Sigmoid colon (tissue), 7 donors: ENCODE measurements at regions of chr20 and their contacts with region 1.

Region 1: DNA sequence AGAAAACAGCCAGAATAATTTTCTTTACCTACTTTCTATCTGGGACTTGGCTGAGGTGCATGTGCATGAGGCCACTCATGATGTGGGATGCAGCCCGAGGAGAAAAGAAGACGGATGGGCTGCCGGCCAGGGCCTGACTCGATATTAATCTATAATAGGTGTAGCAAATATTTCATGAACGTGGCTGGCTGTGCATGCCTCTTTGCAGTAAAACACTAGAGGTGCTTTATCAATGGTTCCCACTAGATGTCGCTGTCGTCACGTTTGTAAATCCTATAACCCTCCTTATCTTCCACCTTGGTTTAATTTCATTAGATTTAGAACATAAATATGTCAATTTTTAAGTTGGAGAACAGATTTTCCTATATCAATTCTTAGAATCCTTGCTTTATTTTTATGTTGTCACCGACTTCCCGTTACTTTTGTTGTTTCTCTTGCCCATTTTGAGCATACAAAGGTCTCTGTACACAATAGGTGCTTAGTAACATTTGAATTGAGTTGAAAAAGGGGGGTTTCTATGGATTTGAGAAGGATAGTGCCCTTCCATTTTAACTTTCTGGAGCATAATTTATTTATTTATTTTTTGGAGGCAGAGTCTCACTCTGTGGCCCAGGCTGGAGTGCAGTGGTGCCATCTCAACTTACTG is 19.6 kb upstream of the FERMT1 start:
- DNase-seq: no peak
- H3K4me3 ChIP-seq: no peak overlapping the region
- H3K27ac ChIP-seq: no peak overlapping the region
- H3K4me1 ChIP-seq: no peaks in the 10 kb centered on the region
- H3K27me3 ChIP-seq: peaks cover 0 to 11% (median 0%) of the 10 kb centered on the region in 3 donors
- CTCF ChIP-seq: peak; percentile 12 to 76 (median 48)
- EP300 ChIP-seq: no peak
- POLR2A ChIP-seq: no peak

Region 2: DNA sequence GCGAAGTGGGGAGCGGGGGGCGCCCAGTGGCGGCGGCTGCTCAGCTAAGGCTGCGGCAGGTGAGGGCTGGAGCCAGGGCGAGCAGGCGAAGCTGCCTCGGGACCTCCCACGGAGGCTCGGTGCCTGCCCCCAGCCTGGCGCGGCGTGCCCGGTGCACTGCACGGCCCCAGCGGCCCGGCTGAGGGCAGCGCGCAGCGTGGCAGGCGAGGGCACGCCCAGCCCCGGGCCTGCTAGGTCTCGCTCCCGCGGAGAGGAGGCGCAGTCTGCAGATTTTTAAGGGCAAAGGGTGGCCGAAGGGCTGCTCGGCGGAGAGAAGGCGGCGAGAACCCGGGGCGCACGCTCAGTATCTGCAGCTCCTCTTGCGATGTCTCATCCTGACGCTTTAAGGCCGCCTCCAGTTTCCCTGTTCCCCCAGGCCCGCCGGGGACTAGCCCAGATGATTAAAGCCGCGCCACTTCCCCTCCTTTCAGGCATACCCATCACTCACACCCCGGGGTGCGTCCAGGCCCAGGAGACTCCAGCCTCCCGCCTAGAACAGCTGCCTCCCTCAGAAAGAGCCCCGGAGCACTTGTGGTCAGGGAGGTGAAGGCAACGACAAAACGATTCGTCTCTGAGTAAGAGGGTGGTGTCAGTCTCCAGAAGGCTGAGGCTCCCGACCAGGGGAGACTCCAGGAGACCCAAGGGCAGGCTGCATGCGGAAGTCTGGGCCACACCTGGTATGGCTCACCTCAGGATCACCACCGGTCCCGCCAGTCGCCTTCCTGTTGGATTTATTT is 19.4 kb before region 1 on chr20 and contains the start of gene FERMT1:
- intact Hi-C with region 1: no loop called
- DNase-seq: peak; percentile 68
- H3K4me3 ChIP-seq: peak within 1 kb of the TSS; percentile 7 to 51 (median 44)
- H3K27ac ChIP-seq: peak within 1 kb of the TSS in 3 of 4 donors; percentile 7 to 18 (median 18)
- H3K4me1 ChIP-seq: peaks cover 0 to 16% (median 12%) of the 10 kb centered on the region in 4 donors
- H3K27me3 ChIP-seq: peaks cover 5 to 40% (median 12%) of the 10 kb centered on the region in 3 donors
- CTCF ChIP-seq: no peak
- EP300 ChIP-seq: no peak
- POLR2A ChIP-seq: no peak
- total RNA-seq, gene FERMT1: 0.16 to 0.41 (median 0.32) TPM

Region 3: GRCh38 chr20:6209093-6209492 is 66.6 kb after region 1 on chr20:
- intact Hi-C with region 1: no loop called
- DNase-seq: no peak
- H3K4me3 ChIP-seq: no peak overlapping the region
- H3K27ac ChIP-seq: no peak overlapping the region
- H3K4me1 ChIP-seq: no peaks in the 10 kb centered on the region
- H3K27me3 ChIP-seq: no peaks in the 10 kb centered on the region
- CTCF ChIP-seq: no peak
- EP300 ChIP-seq: no peak
- POLR2A ChIP-seq: no peak

Region 4: DNA sequence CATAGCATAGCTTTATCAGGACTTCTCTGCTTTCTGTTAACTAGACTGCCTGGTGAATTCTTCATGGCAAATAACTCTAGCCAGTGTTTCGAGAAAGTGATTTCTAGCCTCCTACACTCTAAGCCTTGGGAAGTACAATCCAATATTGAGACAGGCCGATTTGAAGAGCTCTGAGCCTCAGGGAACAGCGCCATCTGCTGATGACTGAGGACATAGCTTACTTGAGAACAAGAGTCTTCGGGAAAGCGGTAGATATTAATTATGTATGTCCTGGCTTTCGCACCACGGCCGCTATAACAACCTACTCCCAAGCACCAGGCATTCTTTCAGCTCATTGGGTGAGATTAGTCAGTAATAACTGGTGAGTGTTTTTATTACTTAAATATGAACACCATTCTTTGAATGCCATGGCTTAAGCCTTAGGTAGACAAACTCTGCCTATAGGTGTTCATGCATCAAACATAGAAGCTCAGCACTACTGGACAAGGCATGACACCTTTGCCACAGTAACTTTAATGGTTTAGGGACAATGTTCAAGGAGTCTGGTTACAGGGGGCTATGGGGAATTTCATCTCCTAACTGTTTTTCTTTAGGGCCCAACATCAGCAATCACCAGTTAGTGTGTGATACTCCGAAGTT is 1143.6 kb after region 1 on chr20:
- intact Hi-C with region 1: loop called (anchors 5 kb)
- DNase-seq: peak; percentile 82
- H3K4me3 ChIP-seq: no peak overlapping the region
- H3K27ac ChIP-seq: no peak overlapping the region
- H3K4me1 ChIP-seq: no peaks in the 10 kb centered on the region
- H3K27me3 ChIP-seq: no peaks in the 10 kb centered on the region
- CTCF ChIP-seq: peak; percentile 10 to 72 (median 58)
- EP300 ChIP-seq: no peak
- POLR2A ChIP-seq: no peak

Region 5: GRCh38 chr20:7859356-7859802 is 1716.9 kb after region 1 on chr20:
- intact Hi-C with region 1: loop called (anchors 5 kb)
- DNase-seq: no peak
- H3K4me3 ChIP-seq: no peak overlapping the region
- H3K27ac ChIP-seq: no peak overlapping the region
- H3K4me1 ChIP-seq: peaks cover 0 to 4% (median 0%) of the 10 kb centered on the region in 4 donors
- H3K27me3 ChIP-seq: no peaks in the 10 kb centered on the region
- CTCF ChIP-seq: peak; percentile 53 to 61 (median 56)
- EP300 ChIP-seq: no peak
- POLR2A ChIP-seq: no peak